ENCODE measurements at regions of chr19 and their contacts with region 1.

Region 1: DNA sequence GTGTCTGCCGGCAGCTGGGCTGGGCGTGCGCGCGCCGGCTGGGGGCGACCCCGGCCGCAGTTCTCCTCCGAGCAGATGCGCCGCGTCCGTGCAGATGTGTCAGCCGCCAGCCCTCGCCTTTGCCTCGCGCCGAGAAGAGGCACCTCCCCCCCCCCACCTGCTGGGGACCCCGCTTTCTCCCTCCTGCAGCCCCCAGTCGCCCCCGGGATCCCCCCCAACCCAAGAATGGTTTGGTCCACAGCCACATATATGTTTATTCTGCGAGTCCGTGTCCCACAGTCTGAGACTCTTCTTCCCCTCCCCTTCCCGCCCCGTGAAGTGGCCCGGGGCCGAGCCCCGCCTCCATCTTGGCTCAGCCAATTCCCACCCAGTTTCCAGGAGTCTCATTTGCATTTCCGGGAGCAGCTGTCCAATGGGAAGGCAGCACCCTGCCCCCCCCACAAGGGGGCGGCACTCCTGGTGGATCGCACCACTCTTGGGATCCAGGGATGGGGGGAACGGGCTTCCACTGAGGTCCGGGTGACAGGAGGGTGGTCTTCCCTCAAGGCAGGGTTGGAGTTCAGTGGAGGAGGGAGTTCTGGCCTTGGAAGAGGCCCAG is 8.6 kb downstream of the ISOC2 start:
- DNase-seq: peak; percentile 42
- H3K4me3 Mint-ChIP-seq: no peak overlapping the region
- H3K27ac Mint-ChIP-seq: no peak overlapping the region
- H3K4me1 Mint-ChIP-seq: peaks cover 4% of the 10 kb centered on the region
- H3K27me3 Mint-ChIP-seq: peaks cover 18% of the 10 kb centered on the region

Region 2: DNA sequence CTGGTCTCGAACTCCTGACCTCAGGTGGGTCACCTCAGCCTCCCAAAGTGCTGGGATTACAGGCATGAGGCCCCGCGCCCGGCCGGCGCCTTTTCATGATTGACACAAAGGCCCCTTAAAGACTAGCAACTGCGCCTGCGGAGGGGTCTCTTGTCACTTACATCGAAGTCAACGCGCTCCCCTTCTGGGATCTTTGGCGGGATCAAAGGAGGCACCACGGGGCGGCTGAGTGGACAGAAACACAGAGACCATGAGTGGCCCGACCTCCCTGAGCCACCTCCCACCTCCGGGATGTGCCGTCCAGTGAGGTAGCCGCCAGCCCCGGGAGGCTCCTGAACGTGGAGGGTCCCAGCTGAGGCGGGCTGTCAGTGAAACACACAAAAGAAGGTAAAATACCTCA is 311.2 kb before region 1 on chr19:
- CTCF ChIA-PET with region 1: interaction called, 14 read pairs
- POLR2A ChIA-PET with region 1: no interaction called
- DNase-seq: no peak
- H3K4me3 Mint-ChIP-seq: no peak overlapping the region
- H3K27ac Mint-ChIP-seq: no peak overlapping the region
- H3K4me1 Mint-ChIP-seq: peaks cover 9% of the 10 kb centered on the region
- H3K27me3 Mint-ChIP-seq: peaks cover 25% of the 10 kb centered on the region

Measured in activated CD4-positive, alpha-beta memory T cell treated with anti-CD3 and anti-CD28 coated beads, Interleukin-2, amount 10 ng/mL, durations not matched to agents 7 days and 5 days (primary cell).